ENCODE measurements at regions of chr11 and their contacts with region 1.

Region 1: DNA sequence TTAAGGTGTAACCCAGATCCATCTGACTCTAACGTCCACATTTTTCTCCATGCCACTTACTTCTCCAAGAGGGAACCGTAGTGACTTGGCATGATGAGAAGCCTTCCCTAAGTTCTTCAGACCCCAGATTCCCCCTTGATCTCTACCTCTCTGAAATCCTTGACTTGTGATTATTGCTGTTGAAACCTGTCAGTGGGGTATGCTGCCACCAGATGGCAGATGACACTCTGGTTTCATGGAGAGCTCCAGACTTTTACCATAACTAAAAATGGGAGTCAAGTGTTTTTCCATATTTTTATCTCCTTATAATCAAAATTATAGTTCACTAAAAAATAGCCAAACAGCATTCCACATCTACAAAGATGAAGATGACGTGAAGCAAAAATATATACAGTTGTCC is 504.2 kb downstream of the SOX6 start:
- DNase-seq: no peak
- H3K4me3 ChIP-seq: no peak overlapping the region
- H3K27ac ChIP-seq: no peak overlapping the region
- H3K4me1 ChIP-seq: no peaks in the 10 kb centered on the region
- H3K27me3 ChIP-seq: no peaks in the 10 kb centered on the region
- CTCF ChIP-seq: peak; percentile 13 to 72 (median 69)
- EP300 ChIP-seq: no peak
- POLR2A ChIP-seq: no peak
- RAD21 ChIP-seq: peak; percentile 73 to 84

Region 2: DNA sequence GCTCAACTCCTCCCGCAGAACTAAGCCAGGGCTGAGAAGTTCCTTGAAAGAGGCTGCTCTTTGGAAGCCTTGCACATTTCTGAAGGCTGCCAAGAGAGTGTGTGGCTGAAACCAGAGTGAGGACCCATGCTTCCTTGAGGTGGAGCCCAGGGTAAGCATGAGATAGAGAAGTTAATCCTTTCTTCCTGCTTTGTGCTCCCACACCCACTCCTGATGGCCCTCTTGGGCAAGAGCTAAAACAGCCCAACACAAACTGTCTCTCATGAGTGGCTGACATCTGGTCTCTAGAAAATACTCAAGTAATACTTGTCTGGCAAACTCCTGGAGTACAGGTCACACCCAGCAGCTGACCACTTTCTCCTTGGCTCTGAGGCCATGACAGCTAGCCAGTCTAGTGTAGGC is 213.8 kb before region 1 on chr11:
- CTCF ChIA-PET with region 1: no interaction called
- POLR2A ChIA-PET with region 1: no interaction called
- DNase-seq: no peak
- H3K4me3 ChIP-seq: no peak overlapping the region
- H3K27ac ChIP-seq: no peak overlapping the region
- H3K4me1 ChIP-seq: no peaks in the 10 kb centered on the region
- H3K27me3 ChIP-seq: no peaks in the 10 kb centered on the region
- CTCF ChIP-seq: no peak
- EP300 ChIP-seq: no peak
- POLR2A ChIP-seq: no peak
- RAD21 ChIP-seq: no peak

Region 3: DNA sequence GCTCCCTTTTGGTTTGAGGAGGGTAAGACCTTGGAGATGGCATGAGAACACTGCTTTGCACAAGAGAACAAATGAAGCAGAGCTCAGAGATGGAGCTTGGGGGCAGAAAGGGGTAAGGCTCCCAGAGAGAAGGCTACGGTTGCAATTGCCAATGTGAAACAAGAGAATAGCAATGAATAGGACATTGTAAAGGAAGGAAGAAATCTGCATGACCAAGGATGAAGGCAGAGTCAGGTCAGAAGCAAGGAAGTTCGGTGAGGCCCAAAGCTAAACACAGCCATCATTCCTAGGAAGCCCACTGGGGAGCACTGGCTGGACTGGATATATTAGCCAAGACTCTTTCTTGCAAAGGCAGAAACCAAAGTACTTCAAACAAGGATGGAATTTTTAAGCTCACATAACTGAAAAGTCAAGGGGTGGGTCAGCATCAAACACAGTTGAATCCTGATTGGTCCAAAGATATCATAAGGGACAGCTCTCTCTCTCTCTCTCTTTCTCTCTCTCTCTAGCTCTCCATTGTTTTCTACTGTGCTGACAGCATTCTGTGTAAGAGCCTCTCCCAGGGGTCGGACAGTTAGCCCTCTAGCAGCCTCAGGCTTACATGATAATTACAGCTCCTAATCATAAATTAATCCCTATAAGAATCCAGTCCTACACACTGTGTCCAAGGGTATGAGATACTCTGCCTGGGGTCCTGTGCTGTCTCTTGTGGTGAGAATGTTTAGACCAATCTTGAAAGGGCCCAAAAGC is 19.9 kb after region 1 on chr11:
- CTCF ChIA-PET with region 1: interaction called, 10 read pairs
- POLR2A ChIA-PET with region 1: no interaction called
- DNase-seq: no peak
- H3K4me3 ChIP-seq: no peak overlapping the region; a peak in 1 of 8 replicates
- H3K27ac ChIP-seq: no peak overlapping the region
- H3K4me1 ChIP-seq: peaks cover 0 to 8% (median 5%) of the 10 kb centered on the region in 4 experiments; a peak in 4 of 7 replicates
- H3K27me3 ChIP-seq: no peaks in the 10 kb centered on the region
- CTCF ChIP-seq: no peak
- EP300 ChIP-seq: no peak
- POLR2A ChIP-seq: no peak
- RAD21 ChIP-seq: no peak

Region 4: GRCh38 chr11:15913261-15913660 is 61.1 kb after region 1 on chr11:
- CTCF ChIA-PET with region 1: interaction called, 13 read pairs
- POLR2A ChIA-PET with region 1: no interaction called
- DNase-seq: no peak
- H3K4me3 ChIP-seq: no peak overlapping the region
- H3K27ac ChIP-seq: no peak overlapping the region
- H3K4me1 ChIP-seq: no peaks in the 10 kb centered on the region
- H3K27me3 ChIP-seq: no peaks in the 10 kb centered on the region; a peak in 1 of 7 replicates
- CTCF ChIP-seq: no peak
- EP300 ChIP-seq: no peak
- POLR2A ChIP-seq: no peak
- RAD21 ChIP-seq: no peak; a peak in 1 of 4 replicates